Mammary epithelial cell (primary cell): ENCODE measurements at regions of chr22 and their contacts with region 1.

Region 1: GRCh38 chr22:30116362-30117117 is 36.3 kb downstream of the HORMAD2 start:
- DNase-seq: peak; percentile 76
- H3K4me3 ChIP-seq: no peak overlapping the region
- H3K27ac ChIP-seq: peak overlapping the region; percentile 58
- H3K4me1 ChIP-seq: peaks cover 16% of the 10 kb centered on the region
- H3K27me3 ChIP-seq: no peaks in the 10 kb centered on the region
- CTCF ChIP-seq: no peak

Region 2: GRCh38 chr22:29427176-29427760 is 689.3 kb before region 1 on chr22:
- CTCF ChIA-PET with region 1: no interaction called
- dilution Hi-C with region 1: no loop called
- in situ Hi-C with region 1: no loop called
- intact Hi-C with region 1: no loop called
- DNase-seq: no peak
- H3K4me3 ChIP-seq: no peak overlapping the region
- H3K27ac ChIP-seq: no peak overlapping the region
- H3K4me1 ChIP-seq: no peaks in the 10 kb centered on the region
- H3K27me3 ChIP-seq: peaks cover 7% of the 10 kb centered on the region
- CTCF ChIP-seq: no peak

Region 3: DNA sequence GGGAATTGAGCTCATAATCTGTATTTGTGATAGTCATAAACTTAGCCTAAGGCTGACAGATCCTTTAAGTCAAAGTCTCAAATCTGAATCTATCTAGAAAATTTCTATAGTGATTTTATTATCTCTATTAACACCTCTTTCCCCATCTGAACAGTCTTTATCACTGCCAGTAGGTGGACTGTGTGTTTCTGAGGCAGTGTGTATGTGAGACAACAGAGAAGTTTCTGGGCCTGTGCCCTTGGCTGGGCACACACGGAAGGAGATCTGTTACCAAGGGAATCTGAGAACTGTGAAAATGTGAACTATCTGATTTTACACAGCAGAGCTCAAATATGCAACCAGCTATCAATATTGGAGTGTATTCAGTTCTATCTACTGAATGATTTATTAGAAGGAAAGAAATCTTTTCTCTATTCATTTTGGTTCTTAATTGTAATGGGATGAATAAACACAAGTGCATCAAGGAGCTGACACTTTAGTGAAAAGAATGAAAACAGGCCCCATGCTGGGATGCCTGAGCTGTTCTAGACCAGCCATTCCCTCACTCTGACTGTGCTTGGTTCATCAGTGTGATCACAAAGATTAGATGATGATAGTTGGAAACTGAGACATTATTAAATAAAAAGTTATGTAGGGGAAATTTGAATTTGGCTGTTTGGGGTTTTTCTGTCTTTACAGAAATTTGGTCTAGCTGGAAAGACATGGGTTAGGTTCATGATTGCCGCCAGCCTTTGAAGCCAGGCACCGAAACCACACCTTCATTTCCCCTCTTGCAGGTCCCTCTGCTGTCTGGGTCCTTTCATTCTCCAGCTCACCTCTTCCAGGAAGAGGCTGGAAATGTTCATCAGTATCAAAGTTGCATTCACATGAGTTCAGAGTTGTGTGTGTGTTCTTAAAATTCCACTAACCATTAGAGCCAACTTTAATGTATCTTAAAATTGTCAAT is 61.9 kb after region 1 on chr22:
- CTCF ChIA-PET with region 1: no interaction called
- dilution Hi-C with region 1: loop called (anchors 5 kb)
- in situ Hi-C with region 1: no loop called
- intact Hi-C with region 1: loop called (anchors 2 kb)
- DNase-seq: no peak
- H3K4me3 ChIP-seq: no peak overlapping the region
- H3K27ac ChIP-seq: no peak overlapping the region
- H3K4me1 ChIP-seq: peaks cover 18% of the 10 kb centered on the region
- H3K27me3 ChIP-seq: no peaks in the 10 kb centered on the region
- CTCF ChIP-seq: peak in 1 of 2 donors; percentile 16

Region 4: DNA sequence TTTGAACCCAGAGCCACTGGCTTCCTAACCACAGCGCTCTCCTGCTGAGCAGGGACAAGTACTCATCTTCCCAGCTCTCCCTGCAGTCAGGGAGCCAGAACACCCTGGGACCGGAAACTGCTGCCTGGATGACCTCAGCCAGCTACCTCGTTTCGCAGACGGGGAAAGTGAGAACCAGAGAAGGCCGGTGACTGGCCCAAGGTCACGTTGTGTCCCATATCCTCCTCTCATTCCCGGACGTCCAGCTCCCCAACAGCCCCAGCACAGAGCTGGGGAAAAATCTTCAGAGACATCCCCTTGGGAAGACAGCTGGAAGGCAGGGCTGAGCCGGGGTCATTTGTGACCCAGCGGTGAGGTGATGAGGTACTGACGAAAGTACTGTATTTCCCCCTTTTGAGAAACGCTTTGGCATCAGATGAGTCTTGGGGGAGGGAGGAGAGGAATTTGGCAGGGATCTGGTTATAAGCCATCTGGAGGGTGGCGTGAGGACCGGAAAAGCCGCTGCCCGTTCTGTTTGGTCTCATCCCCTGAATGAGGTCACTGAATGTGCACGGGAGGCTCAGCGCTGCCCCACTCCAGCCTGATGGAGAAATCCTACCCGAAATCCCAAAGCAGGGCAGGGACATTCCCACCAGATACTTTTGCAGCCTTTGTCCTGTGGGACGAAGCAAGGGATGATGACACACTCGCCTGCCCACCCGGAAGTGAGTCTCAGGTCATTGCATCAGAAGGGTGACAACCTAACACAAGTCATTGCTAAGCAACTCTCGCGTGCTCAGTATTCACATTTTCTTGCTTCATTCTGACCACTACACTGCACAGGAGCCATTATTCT is 89.0 kb after region 1 on chr22:
- CTCF ChIA-PET with region 1: no interaction called
- dilution Hi-C with region 1: no loop called
- in situ Hi-C with region 1: no loop called
- intact Hi-C with region 1: loop called (anchors 1 kb)
- DNase-seq: peak; percentile 99
- H3K4me3 ChIP-seq: no peak overlapping the region
- H3K27ac ChIP-seq: peak overlapping the region; percentile 97
- H3K4me1 ChIP-seq: peaks cover 60% of the 10 kb centered on the region
- H3K27me3 ChIP-seq: no peaks in the 10 kb centered on the region
- CTCF ChIP-seq: no peak

Region 5: DNA sequence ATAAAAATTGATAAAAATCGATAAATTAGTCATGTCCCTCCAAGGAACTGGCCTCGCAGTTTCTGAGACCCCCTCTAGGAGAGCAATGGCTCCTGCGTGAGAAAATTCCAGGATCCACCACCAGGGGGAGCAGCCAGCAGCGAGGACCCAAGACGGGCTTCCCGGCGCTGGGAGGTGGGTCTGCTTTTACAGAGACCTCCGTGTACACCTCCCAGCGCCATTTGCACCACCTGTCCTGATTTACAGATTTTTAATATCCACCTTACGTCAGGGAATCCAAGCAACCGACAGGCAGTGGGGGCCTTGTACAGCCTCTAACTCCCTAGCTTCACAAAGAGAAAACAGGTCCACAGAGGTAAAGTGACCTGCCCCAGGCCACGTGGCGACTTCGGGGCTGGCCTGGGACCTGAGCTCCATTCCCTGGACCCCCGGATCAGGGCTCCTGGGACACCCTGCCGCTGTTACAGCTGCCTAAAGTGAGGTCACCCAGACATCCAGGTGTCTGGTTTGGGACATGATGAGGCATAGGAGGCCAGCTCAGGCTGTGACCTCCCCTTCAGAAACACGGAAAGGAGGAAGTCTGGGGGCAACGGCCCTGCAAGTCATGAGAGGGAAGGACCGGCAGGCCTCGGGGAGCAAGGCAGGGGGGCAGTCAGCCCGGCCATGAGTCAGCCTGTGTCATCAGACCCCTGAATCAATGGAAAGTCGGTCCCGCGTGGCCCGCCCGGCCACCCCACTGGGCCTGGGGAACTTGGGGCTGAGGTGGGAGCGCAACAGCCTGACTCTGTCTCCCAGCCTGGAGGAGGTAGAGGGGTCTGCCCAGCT is 146.6 kb after region 1 on chr22:
- CTCF ChIA-PET with region 1: no interaction called
- dilution Hi-C with region 1: no loop called
- in situ Hi-C with region 1: loop called in 1 of 2 experiments (anchors 10 kb)
- intact Hi-C with region 1: no loop called
- DNase-seq: no peak
- H3K4me3 ChIP-seq: no peak overlapping the region
- H3K27ac ChIP-seq: peak overlapping the region; percentile 62
- H3K4me1 ChIP-seq: peaks cover 15% of the 10 kb centered on the region
- H3K27me3 ChIP-seq: no peaks in the 10 kb centered on the region
- CTCF ChIP-seq: peak; percentile 90 to 96